ENCODE measurements at regions of chr4 and their contacts with region 1.

Region 1: GRCh38 chr4:1346781-1347409 is at the start of gene UVSSA:
- DNase-seq: peak; percentile 100
- H3K4me3 Mint-ChIP-seq: peak within 1 kb of the TSS; percentile 91
- H3K27ac Mint-ChIP-seq: peak within 1 kb of the TSS; percentile 91
- H3K4me1 Mint-ChIP-seq: peaks cover 33% of the 10 kb centered on the region
- H3K27me3 Mint-ChIP-seq: no peaks in the 10 kb centered on the region
- total RNA-seq, gene UVSSA: 23.3 and 23.5 TPM in 2 replicates

Region 2: GRCh38 chr4:1167247-1167949 is 179.5 kb before region 1 on chr4:
- intact Hi-C with region 1: loop called (anchors 1 kb)
- DNase-seq: peak; percentile 86
- H3K4me3 Mint-ChIP-seq: peak overlapping the region; percentile 74
- H3K27ac Mint-ChIP-seq: peak overlapping the region; percentile 60
- H3K4me1 Mint-ChIP-seq: peaks cover 19% of the 10 kb centered on the region
- H3K27me3 Mint-ChIP-seq: peaks cover 17% of the 10 kb centered on the region

Region 3: GRCh38 chr4:1249148-1249730 is 97.7 kb before region 1 on chr4:
- intact Hi-C with region 1: loop called (anchors 1 kb)
- DNase-seq: peak; percentile 83
- H3K4me3 Mint-ChIP-seq: peak overlapping the region; percentile 87
- H3K27ac Mint-ChIP-seq: peak overlapping the region; percentile 96
- H3K4me1 Mint-ChIP-seq: peaks cover 29% of the 10 kb centered on the region
- H3K27me3 Mint-ChIP-seq: no peaks in the 10 kb centered on the region

Region 4: DNA sequence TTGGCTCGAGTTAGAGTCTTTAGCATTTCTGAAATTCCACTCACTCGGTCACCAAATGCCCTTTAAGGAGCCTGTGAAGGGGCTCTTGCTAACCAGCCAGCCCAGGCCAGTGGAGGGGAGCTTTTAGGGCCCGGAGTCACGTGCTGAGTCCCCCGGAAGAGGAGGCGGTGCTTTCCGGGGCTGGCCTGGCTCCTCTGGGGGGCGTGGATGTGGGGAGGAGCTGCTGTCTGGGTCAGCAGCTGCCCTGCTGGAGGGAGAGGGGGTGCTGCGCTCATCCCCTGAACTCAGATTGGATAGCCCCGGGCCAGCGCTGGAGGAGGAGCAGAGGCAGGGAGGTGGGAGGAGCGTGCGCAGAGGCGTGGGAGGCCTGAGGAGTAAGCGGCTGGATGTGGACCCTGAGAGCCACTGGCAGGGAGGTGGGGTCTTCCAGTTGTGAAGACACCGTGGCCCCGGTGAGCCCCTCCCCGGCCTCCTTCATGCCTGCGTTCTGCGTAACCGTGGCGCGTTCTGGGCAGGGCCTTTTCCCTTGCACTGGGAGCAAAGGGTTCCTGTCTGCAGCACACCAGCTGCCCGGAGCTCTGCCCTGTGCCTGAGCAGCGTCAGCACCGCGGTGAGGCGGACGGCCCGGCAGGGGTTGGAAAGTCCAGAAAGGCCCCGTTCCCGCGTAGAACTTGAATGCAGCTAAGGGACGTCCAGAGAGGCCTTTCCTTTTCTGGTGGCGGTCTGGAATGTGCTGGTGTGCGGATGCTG is 37.5 kb before region 1 on chr4:
- intact Hi-C with region 1: loop called (anchors 1 kb)
- DNase-seq: peak; percentile 36
- H3K4me3 Mint-ChIP-seq: peak overlapping the region; percentile 52
- H3K27ac Mint-ChIP-seq: peak overlapping the region; percentile 26
- H3K4me1 Mint-ChIP-seq: peaks cover 34% of the 10 kb centered on the region
- H3K27me3 Mint-ChIP-seq: no peaks in the 10 kb centered on the region

Region 5: DNA sequence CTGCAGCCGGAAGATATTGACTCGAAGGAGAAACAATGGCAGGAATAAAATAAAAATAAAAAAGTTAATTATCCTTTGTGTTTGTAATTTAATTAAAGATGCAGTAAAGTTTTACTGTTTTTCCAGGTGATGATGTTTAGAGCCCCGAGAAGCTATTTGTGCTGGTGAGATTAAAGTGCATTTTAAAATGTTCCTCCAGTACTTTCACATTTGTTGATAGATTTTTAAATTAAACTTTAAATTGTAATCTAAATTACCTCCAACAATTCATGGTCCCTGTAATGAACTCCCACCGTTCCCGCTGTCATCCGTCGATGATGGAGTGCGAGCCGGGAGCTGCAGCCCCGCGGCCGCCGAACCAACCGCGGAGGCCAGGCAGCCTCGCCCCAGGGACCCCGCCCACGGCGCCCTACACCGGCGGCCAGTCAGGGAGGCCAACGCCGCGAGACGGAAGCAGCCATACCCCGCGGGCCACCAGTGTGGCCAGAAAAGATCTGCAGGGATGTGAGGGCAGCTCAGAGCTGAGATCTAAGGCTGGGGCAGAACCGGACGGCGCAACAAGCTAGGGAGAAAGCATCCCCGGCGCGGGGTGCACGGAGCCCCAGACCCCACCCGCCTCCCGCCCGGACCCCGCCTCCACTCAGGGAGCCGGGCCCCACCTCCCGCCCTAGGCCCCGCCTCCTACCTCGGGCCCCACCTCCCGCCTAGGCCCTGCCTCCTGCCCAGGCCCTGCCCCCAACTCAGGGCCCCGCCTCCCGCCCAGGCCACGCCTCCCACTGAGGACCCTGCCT is 233.2 kb after region 1 on chr4:
- intact Hi-C with region 1: loop called (anchors 1 kb)
- DNase-seq: peak; percentile 82
- H3K4me3 Mint-ChIP-seq: peak overlapping the region; percentile 67
- H3K27ac Mint-ChIP-seq: peak overlapping the region; percentile 68
- H3K4me1 Mint-ChIP-seq: peaks cover 2% of the 10 kb centered on the region
- H3K27me3 Mint-ChIP-seq: no peaks in the 10 kb centered on the region

Region 6: GRCh38 chr4:2745981-2746806 is 1399.3 kb after region 1 on chr4:
- intact Hi-C with region 1: no loop called
- DNase-seq: peak; percentile 84
- H3K4me3 Mint-ChIP-seq: peak overlapping the region; percentile 63
- H3K27ac Mint-ChIP-seq: peak overlapping the region; percentile 98
- H3K4me1 Mint-ChIP-seq: peaks cover 53% of the 10 kb centered on the region
- H3K27me3 Mint-ChIP-seq: no peaks in the 10 kb centered on the region

Measured in activated T-helper 2 cell treated with anti-CD3 and anti-CD28 coated beads, Interferon-gamma antibody, Interleukin-2, Interleukin-4, amounts not matched to agents 10 μg/mL and 5 μg/mL and 100 μg/mL, durations not matched to agents 14 hours and 24 hours and 36 hours (primary cell).